Esophagus squamous epithelium (tissue), 5 donors: ENCODE measurements at regions of chr13 and their contacts with region 1.

Region 1: GRCh38 chr13:30465585-30466357 is at the start of gene HMGB1:
- DNase-seq: peak; percentile 91
- H3K4me3 ChIP-seq: peak within 1 kb of the TSS; percentile 72 to 97 (median 94)
- H3K27ac ChIP-seq: peak within 1 kb of the TSS; percentile 97 to 100 (median 99)
- H3K4me1 ChIP-seq: peaks cover 9 to 37% (median 23%) of the 10 kb centered on the region in 3 donors
- H3K27me3 ChIP-seq: no peaks in the 10 kb centered on the region
- CTCF ChIP-seq: peak in 3 of 6 experiments; percentile 14 to 22 (median 15)
- POLR2A ChIP-seq: peak in 3 of 4 donors; percentile 99 to 100 (median 100)
- total RNA-seq, gene HMGB1: 189 to 446 (median 280) TPM

Region 2: GRCh38 chr13:30408319-30409101 is 57.3 kb before region 1 on chr13:
- intact Hi-C with region 1: loop called (anchors 10 kb)
- DNase-seq: peak; percentile 82
- H3K4me3 ChIP-seq: peak overlapping the region; percentile 12 to 53 (median 38)
- H3K27ac ChIP-seq: peak overlapping the region; percentile 84 to 92 (median 86)
- H3K4me1 ChIP-seq: peaks cover 4 to 70% (median 26%) of the 10 kb centered on the region in 3 donors
- H3K27me3 ChIP-seq: no peaks in the 10 kb centered on the region
- CTCF ChIP-seq: peak; percentile 82 to 92 (median 88)
- POLR2A ChIP-seq: peak in 1 of 4 donors; percentile 47

Region 3: GRCh38 chr13:30535046-30535445 is 69.3 kb after region 1 on chr13:
- intact Hi-C with region 1: no loop called
- DNase-seq: no peak
- H3K4me3 ChIP-seq: no peak overlapping the region
- H3K27ac ChIP-seq: no peak overlapping the region
- H3K4me1 ChIP-seq: no peaks in the 10 kb centered on the region
- H3K27me3 ChIP-seq: no peaks in the 10 kb centered on the region
- CTCF ChIP-seq: no peak
- POLR2A ChIP-seq: no peak

Region 4: DNA sequence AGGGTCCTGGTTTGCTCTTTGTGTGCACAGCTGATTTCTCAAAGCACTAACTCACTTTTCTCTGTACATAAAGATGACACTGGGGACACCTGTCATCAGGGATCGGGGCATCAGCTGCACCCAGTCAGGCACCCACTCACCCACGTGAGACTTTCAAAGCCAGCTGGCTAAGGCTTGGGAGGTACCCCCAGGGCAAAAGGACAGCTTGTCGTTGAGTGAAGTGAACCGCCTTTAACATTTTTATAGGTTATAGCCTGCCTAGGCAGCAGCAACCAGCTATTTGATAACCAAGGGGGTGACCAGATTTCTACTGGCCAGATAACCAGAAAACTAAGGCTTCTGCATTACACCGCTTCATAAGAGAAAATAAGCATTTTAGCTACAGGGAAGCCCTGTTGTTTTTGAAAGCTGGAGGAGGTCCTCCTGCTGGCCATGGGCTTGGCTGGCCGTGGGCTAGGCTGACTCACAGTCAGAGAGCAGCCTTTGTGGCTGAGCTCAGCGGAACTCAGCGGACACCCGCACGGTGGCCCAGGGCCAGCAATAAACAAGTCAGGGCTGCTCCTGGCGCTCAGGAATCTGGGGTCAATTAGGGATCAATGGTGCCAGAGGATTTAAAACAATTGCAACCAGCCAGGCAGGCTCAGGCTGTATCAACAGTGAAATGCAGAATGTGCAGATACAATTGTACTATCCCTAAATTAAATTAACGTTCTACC is 326.7 kb after region 1 on chr13:
- intact Hi-C with region 1: loop called (anchors 10 kb)
- DNase-seq: no peak
- H3K4me3 ChIP-seq: peak overlapping the region in 1 of 4 donors; percentile 35
- H3K27ac ChIP-seq: peak overlapping the region; percentile 44 to 74 (median 64)
- H3K4me1 ChIP-seq: peaks cover 16 to 60% (median 32%) of the 10 kb centered on the region in 3 donors
- H3K27me3 ChIP-seq: no peaks in the 10 kb centered on the region
- CTCF ChIP-seq: peak in 4 of 6 experiments; percentile 8 to 40 (median 28)
- POLR2A ChIP-seq: no peak